ENCODE measurements at regions of chr17 and their contacts with region 1.

Region 1: GRCh38 chr17:38410201-38410600 is 18.1 kb upstream of the ARHGAP23 start:
- DNase-seq: peak in 1 of 2 donors; percentile 60
- H3K4me3 ChIP-seq: no peak overlapping the region
- H3K27ac ChIP-seq: no peak overlapping the region
- H3K4me1 ChIP-seq: peaks cover 6% of the 10 kb centered on the region
- H3K27me3 ChIP-seq: no peaks in the 10 kb centered on the region
- CTCF ChIP-seq: no peak
- POLR2A ChIP-seq: no peak

Region 2: DNA sequence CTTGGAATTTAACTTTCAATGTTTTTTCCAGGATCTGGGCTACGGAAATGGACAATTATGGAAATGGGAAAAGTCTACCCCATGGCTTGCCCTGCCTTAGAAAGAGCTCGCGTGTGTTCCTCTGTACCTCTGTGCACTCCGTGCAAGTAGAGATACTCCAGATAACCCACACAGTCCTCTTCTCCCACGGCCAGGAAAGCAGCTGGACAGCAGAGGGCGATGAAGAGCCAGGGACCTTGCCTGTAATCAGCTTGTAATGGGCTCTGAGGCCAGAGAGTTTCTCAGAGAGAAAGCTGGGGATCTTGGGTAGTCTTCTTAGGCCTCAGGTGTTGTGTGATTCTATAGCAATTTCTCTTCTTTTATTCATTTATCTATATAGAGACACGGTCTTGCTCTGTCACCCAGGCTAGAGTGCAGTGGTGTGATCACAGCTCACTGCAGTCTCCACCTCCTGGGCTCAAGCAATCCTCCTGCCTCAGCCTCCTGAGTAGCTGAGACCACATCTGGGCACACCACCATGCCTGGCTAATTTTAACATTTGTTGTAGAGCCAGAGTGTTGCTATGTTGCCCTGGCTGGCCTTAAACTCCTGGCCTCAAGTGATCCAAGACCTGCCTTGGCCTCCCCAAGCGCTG is 61.0 kb before region 1 on chr17:
- intact Hi-C with region 1: loop called (anchors 2 kb)
- DNase-seq: no peak
- H3K4me3 ChIP-seq: no peak overlapping the region
- H3K27ac ChIP-seq: no peak overlapping the region
- H3K4me1 ChIP-seq: peaks cover 20% of the 10 kb centered on the region
- H3K27me3 ChIP-seq: no peaks in the 10 kb centered on the region
- CTCF ChIP-seq: peak; percentile 78 to 85 (median 85)
- POLR2A ChIP-seq: no peak

Region 3: DNA sequence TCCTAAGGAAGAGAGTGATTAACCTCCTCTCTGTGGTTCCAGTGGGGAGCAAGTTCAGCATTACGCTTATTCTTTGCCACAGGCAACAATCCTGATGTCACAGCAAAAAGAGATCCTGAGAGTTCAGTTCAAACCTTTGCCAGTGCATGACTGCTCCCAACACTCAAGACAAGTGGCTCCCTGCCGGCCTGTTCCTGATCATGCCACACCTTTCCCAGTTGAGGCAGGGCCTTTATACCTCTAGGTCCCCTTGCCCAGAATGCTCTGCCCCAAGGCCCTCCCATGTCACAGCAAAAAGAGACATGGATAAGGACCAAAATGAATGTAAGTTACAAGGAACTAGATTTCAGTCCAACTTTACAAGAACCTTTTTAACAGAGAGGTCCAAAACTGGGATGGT is 13.0 kb before region 1 on chr17:
- intact Hi-C with region 1: no loop called
- DNase-seq: no peak
- H3K4me3 ChIP-seq: no peak overlapping the region
- H3K27ac ChIP-seq: no peak overlapping the region
- H3K4me1 ChIP-seq: no peaks in the 10 kb centered on the region
- H3K27me3 ChIP-seq: no peaks in the 10 kb centered on the region
- CTCF ChIP-seq: no peak
- POLR2A ChIP-seq: no peak